ENCODE measurements at regions of chr10 and their contacts with region 1.

Region 1: DNA sequence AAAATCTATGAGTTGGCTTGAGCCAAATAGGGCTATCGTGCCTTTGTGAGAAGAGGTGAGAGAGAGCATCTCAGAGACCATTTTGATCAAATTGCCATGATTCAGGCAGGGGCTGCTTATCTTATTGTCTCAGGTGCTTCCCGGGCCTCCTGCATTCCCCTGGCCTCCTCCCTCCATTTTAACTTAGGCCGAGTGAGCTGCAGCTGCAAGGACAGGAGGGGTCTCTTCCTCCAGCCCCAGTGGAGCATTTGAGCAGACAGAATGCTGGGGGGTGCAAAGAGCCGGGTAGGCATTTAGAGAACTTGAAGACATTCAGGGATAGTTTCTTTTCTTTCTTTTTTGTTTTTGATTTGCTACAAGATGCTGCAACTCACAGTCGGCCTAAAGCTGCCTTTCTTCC is 59.0 kb downstream of the BUB3 start:
- DNase-seq: no peak
- H3K4me3 ChIP-seq: no peak overlapping the region
- H3K27ac ChIP-seq: no peak overlapping the region
- H3K4me1 ChIP-seq: no peaks in the 10 kb centered on the region
- H3K27me3 ChIP-seq: no peaks in the 10 kb centered on the region
- CTCF ChIP-seq: no peak
- POLR2A ChIP-seq: no peak

Region 2: GRCh38 chr10:121433965-121434364 is 1779.2 kb before region 1 on chr10:
- intact Hi-C with region 1: loop called (anchors 5 kb)
- DNase-seq: no peak
- H3K4me3 ChIP-seq: no peak overlapping the region
- H3K27ac ChIP-seq: no peak overlapping the region
- H3K4me1 ChIP-seq: no peaks in the 10 kb centered on the region
- H3K27me3 ChIP-seq: no peaks in the 10 kb centered on the region
- CTCF ChIP-seq: no peak
- POLR2A ChIP-seq: no peak